ENCODE measurements at regions of chr3 and their contacts with region 1.

Region 1: GRCh38 chr3:40584625-40585189 is 59.9 kb downstream of the ZNF621 start:
- DNase-seq: peak; percentile 57 to 62
- ATAC-seq: peak; percentile 60 to 83
- H3K4me3 ChIP-seq: no peak overlapping the region
- H3K27ac ChIP-seq: no peak overlapping the region
- H3K4me1 ChIP-seq: no peaks in the 10 kb centered on the region
- H3K27me3 ChIP-seq: no peaks in the 10 kb centered on the region
- CTCF ChIP-seq: peak; percentile 63 to 95 (median 83)
- POLR2A ChIP-seq: no peak

Region 2: GRCh38 chr3:40137593-40138295 is 447.0 kb before region 1 on chr3:
- in situ Hi-C with region 1: no loop called
- intact Hi-C with region 1: no loop called
- DNase-seq: no peak
- ATAC-seq: no peak
- H3K4me3 ChIP-seq: no peak overlapping the region
- H3K27ac ChIP-seq: no peak overlapping the region
- H3K4me1 ChIP-seq: no peaks in the 10 kb centered on the region
- H3K27me3 ChIP-seq: no peaks in the 10 kb centered on the region
- CTCF ChIP-seq: no peak
- POLR2A ChIP-seq: no peak

Region 3: DNA sequence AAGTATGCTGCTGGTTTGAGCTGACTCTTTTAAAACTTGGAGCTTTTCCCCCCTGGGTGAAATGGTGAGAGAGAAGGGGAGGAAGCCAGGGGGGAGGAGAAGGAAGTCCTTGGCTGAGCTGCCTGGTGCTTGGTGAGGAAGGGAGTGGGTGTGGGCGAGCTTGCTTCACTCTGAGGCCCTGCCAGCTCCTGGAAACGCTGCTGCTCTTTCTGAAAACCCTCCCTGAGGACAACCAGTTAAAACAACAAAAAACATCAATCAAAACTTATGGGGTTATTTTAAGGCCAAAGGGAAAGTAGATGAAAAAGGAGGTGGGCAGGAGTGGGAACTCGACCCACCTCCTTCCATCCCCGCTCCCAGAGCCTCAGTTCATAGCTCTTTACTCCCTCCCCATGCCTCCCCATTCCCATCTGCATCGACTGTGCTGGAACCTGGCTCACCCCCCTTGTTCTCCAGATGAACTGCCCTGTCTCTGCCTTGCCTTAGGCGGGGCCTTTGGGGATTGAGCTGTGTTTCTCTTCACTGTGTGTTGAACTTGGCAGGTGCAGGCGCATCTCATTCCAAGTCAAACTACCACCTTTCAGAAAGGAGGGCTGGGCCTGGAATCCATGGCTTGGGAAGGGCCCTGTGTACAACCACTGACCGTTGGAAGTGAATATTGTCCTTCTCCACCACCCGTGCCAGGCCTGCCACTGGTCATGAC is 106.2 kb after region 1 on chr3:
- in situ Hi-C with region 1: no loop called
- intact Hi-C with region 1: no loop called
- DNase-seq: peak; percentile 40 to 71
- ATAC-seq: peak; percentile 66 to 72
- H3K4me3 ChIP-seq: no peak overlapping the region
- H3K27ac ChIP-seq: peak overlapping the region; percentile 18 to 47 (median 34)
- H3K4me1 ChIP-seq: peaks cover 8 to 21% of the 10 kb centered on the region in 2 donors
- H3K27me3 ChIP-seq: no peaks in the 10 kb centered on the region
- CTCF ChIP-seq: no peak
- POLR2A ChIP-seq: no peak

Region 4: DNA sequence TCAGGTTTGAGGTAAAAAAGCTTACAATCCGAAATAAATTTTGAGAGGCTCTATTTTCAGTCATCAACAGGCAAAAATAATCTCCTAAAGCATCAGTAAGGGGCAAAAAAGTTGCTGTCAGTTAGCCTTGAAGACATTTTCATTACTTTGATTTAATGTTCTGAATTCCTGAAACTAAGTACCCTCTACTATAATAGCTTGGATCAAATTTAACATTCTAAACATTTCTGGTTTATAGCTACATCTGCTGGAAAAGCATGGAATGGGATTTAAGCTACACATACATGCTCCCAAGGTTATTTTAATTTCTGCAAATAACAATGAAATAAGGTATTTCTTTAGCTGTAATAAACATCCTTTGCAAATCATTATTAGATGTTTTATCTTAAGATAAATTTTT is 1131.8 kb after region 1 on chr3:
- in situ Hi-C with region 1: no loop called
- intact Hi-C with region 1: loop called (anchors 10 kb)
- DNase-seq: no peak
- ATAC-seq: no peak
- H3K4me3 ChIP-seq: no peak overlapping the region
- H3K27ac ChIP-seq: no peak overlapping the region
- H3K4me1 ChIP-seq: no peaks in the 10 kb centered on the region
- H3K27me3 ChIP-seq: no peaks in the 10 kb centered on the region
- CTCF ChIP-seq: no peak
- POLR2A ChIP-seq: no peak

Measured in gastrocnemius medialis (tissue), 4 donors.